GM12878 (cell line): ENCODE measurements at regions of chr7 and their contacts with region 1.

Region 1: GRCh38 chr7:130982160-130982638 is 248.2 kb upstream of the KLF14 start:
- DNase-seq: no peak
- ATAC-seq: peak; percentile 97
- H3K4me3 ChIP-seq: no peak overlapping the region
- H3K27ac ChIP-seq: no peak overlapping the region
- H3K4me1 ChIP-seq: peaks cover 3% of the 10 kb centered on the region; the same call in 1 of the 2 replicates
- H3K27me3 ChIP-seq: no peaks in the 10 kb centered on the region
- CTCF ChIP-seq: peak; percentile 81 to 86 (median 85)
- EP300 ChIP-seq: no peak
- POLR2A ChIP-seq: no peak
- RAD21 ChIP-seq: peak; percentile 81

Region 2: DNA sequence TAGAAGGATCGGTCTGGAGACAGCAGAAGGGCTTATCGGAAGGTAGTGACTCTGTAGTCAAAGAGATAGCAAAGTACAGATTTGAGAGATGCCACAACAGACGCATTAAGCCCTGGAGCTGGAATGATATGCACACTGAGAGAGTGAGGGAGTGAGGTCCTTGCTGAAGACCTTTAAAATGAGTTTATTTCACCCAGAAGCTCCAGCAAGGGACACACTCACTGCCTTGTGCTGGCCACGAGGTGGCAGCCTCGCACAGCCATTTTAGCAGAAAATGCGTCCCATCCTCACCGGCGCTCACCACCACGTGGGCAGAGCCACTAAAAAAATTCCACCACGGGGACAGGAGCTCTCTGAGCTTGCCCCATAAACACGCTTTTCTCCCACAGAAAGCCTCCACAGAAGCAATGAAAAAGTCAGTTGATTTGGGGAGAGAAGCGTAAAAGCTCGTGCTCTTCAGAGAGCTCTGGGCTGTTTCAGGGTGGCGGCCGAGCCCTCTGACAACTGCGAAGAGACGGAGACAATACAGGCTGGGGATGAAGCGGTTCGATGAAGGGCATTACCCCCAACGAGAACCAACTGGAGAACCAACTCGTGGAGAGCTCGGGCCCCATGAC is 85.2 kb before region 1 on chr7:
- CTCF ChIA-PET with region 1: interaction called, 42 read pairs
- POLR2A ChIA-PET with region 1: interaction called, 4 read pairs
- RAD21 ChIA-PET with region 1: interaction called, 33 read pairs
- SMC1A ChIA-PET with region 1: interaction called, 24 read pairs
- in situ Hi-C with region 1: no loop called
- intact Hi-C with region 1: no loop called
- DNase-seq: no peak
- ATAC-seq: peak; percentile 83
- H3K4me3 ChIP-seq: no peak overlapping the region
- H3K27ac ChIP-seq: no peak overlapping the region
- H3K4me1 ChIP-seq: peaks cover 51% of the 10 kb centered on the region
- H3K27me3 ChIP-seq: no peaks in the 10 kb centered on the region
- CTCF ChIP-seq: peak; percentile 75 to 87 (median 83)
- EP300 ChIP-seq: no peak
- POLR2A ChIP-seq: peak; percentile 57; the same call in 1 of the 2 replicates
- RAD21 ChIP-seq: peak; percentile 89

Region 3: DNA sequence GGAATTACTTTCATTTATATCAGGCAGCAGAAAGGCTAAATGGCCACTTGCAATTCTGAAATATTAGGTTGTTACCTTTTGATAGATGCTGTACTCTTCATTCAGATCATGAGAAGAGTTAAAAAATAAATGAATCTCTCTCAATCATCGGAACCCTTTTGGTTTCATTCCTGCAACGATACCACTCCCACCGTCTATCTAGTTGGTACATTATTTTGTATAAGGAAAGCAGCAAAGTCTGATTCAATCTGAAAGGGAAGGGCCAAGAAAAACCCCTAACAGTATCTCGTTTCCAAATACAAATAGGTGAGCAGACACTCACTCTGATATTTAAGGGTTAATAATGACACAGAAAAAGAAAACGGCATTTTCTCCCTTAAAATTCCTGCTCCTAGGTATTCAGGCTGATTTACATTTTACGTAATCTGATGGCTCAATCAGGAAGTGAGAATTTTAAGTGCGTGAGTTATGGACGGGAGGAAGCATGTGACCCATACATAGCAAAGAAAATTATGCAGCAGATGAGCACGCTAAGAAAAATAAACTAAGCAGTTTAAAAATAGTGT is 38.8 kb before region 1 on chr7:
- CTCF ChIA-PET with region 1: interaction called, 25 read pairs
- POLR2A ChIA-PET with region 1: no interaction called
- RAD21 ChIA-PET with region 1: interaction called, 5 read pairs
- SMC1A ChIA-PET with region 1: interaction called, 6 read pairs
- in situ Hi-C with region 1: no loop called
- intact Hi-C with region 1: no loop called
- DNase-seq: no peak
- ATAC-seq: peak; percentile 22
- H3K4me3 ChIP-seq: peak overlapping the region; percentile 39
- H3K27ac ChIP-seq: peak overlapping the region; percentile 78
- H3K4me1 ChIP-seq: peaks cover 36% of the 10 kb centered on the region
- H3K27me3 ChIP-seq: no peaks in the 10 kb centered on the region
- CTCF ChIP-seq: no peak
- EP300 ChIP-seq: peak in 1 of 2 experiments; percentile 43; a peak in 2 of 4 replicates
- POLR2A ChIP-seq: no peak
- RAD21 ChIP-seq: no peak

Region 4: DNA sequence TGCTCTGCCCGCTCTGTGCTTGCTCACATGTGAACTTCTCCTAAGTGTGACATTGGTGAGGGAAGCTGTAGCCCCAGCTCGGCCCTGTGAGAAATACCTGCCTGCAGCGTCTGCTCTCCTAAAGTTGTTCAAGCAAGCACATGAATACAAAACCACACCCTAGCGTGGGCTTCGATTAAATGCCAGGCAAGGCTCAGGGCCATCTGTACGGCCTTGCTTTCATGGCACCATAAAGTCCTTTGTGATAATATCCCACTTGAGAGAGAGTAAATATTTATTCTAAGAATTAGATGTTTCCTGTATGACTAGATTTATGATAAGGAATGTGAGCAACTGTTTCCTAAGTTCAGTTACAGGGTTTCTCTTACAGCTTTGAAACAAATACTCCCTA is 14.6 kb after region 1 on chr7:
- CTCF ChIA-PET with region 1: interaction called, 91 read pairs
- POLR2A ChIA-PET with region 1: interaction called, 10 read pairs
- RAD21 ChIA-PET with region 1: interaction called, 35 read pairs
- SMC1A ChIA-PET with region 1: interaction called, 49 read pairs
- in situ Hi-C with region 1: no loop called
- intact Hi-C with region 1: no loop called
- DNase-seq: no peak
- ATAC-seq: peak; percentile 45
- H3K4me3 ChIP-seq: no peak overlapping the region
- H3K27ac ChIP-seq: no peak overlapping the region
- H3K4me1 ChIP-seq: peaks cover 18% of the 10 kb centered on the region
- H3K27me3 ChIP-seq: no peaks in the 10 kb centered on the region
- CTCF ChIP-seq: no peak
- EP300 ChIP-seq: no peak
- POLR2A ChIP-seq: no peak; the same call in 1 of the 2 replicates
- RAD21 ChIP-seq: no peak

Region 5: DNA sequence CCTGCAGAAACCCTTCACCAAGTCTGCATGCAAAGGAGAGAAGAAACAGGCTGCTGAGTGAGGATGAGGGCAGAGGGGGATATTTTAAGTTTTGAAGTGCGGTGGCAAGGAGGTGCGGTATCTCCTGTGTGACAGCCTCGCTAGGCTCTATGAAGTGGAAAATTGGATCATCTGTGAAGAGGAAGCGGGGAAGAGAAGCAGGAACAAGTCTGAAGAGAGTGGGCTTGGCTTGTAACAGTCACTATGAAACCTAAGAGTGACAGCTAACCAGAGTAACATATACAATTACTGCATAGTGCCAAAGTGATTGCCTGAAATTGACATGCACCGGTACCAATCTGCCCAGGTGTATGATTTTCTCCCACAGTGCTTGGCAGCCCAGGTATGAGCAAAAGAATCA is 39.3 kb after region 1 on chr7:
- CTCF ChIA-PET with region 1: interaction called, 23 read pairs
- POLR2A ChIA-PET with region 1: no interaction called
- RAD21 ChIA-PET with region 1: interaction called, 8 read pairs
- SMC1A ChIA-PET with region 1: interaction called, 12 read pairs
- in situ Hi-C with region 1: no loop called
- intact Hi-C with region 1: no loop called
- DNase-seq: no peak
- ATAC-seq: peak; percentile 78
- H3K4me3 ChIP-seq: peak overlapping the region; percentile 33
- H3K27ac ChIP-seq: peak overlapping the region; percentile 80
- H3K4me1 ChIP-seq: peaks cover 40% of the 10 kb centered on the region
- H3K27me3 ChIP-seq: no peaks in the 10 kb centered on the region
- CTCF ChIP-seq: no peak
- EP300 ChIP-seq: peak in 1 of 2 experiments; percentile 17; a peak in 1 of 4 replicates
- POLR2A ChIP-seq: no peak; the same call in 1 of the 2 replicates
- RAD21 ChIP-seq: no peak

Region 6: GRCh38 chr7:131045526-131045925 is 63.3 kb after region 1 on chr7:
- CTCF ChIA-PET with region 1: interaction called, 150 read pairs
- POLR2A ChIA-PET with region 1: interaction called, 5 read pairs
- RAD21 ChIA-PET with region 1: interaction called, 80 read pairs
- SMC1A ChIA-PET with region 1: interaction called, 111 read pairs
- in situ Hi-C with region 1: no loop called
- intact Hi-C with region 1: loop called (anchors 1 kb)
- DNase-seq: no peak
- ATAC-seq: no peak
- H3K4me3 ChIP-seq: no peak overlapping the region
- H3K27ac ChIP-seq: no peak overlapping the region
- H3K4me1 ChIP-seq: 0 out of 2 replicates have a peak, but pooled peaks cover 2% of the 10 kb centered on the region
- H3K27me3 ChIP-seq: no peaks in the 10 kb centered on the region
- CTCF ChIP-seq: no peak
- EP300 ChIP-seq: no peak
- POLR2A ChIP-seq: no peak
- RAD21 ChIP-seq: no peak